Esophagus muscularis mucosa (tissue), 4 donors: ENCODE measurements at regions of chr17 and their contacts with region 1.

Region 1: GRCh38 chr17:9890124-9890523 is 14.9 kb downstream of the RCVRN start:
- DNase-seq: no peak
- H3K4me3 ChIP-seq: no peak overlapping the region
- H3K27ac ChIP-seq: no peak overlapping the region
- H3K4me1 ChIP-seq: no peaks in the 10 kb centered on the region
- H3K27me3 ChIP-seq: no peaks in the 10 kb centered on the region
- CTCF ChIP-seq: peak; percentile 42 to 63 (median 47)
- EP300 ChIP-seq: no peak
- POLR2A ChIP-seq: no peak

Region 2: GRCh38 chr17:9729735-9730420 is 160.2 kb before region 1 on chr17:
- intact Hi-C with region 1: loop called (anchors 10 kb)
- DNase-seq: no peak
- H3K4me3 ChIP-seq: no peak overlapping the region
- H3K27ac ChIP-seq: no peak overlapping the region
- H3K4me1 ChIP-seq: no peaks in the 10 kb centered on the region
- H3K27me3 ChIP-seq: peaks cover 0 to 9% (median 0%) of the 10 kb centered on the region in 4 donors
- CTCF ChIP-seq: no peak
- EP300 ChIP-seq: no peak
- POLR2A ChIP-seq: no peak